Calu3 (cell line): ENCODE measurements at regions of chr4 and their contacts with region 1.

Region 1: DNA sequence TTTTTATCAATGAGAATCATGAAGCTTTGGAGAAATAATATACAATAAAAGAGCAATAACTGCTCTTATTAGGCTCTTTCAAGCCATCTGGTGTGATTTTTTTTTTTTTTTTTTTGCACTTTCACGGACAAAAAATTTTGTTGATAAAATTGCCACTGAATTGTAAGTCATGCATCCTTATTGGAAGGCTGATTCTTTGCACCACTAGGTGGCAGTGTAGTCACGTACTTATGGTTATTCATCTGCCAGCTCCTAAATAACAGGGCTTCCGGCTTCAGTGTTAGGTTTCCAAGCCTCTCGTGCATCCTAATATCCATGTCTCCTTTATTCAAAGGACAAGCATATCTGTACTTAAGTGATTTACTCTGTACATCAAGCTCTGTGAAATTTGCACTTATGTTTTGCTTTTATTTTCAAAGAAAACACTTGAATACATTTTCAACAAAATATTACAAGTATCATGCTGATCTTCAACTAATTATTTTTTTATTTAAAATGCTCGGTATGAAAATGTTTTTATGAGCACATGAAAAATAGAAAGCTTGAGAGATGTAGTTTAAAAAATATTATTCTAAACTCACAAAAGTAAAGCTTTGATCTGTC is 1578.3 kb upstream of the TENM3 start:
- DNase-seq: peak; percentile 72
- H3K4me3 Mint-ChIP-seq: no peak overlapping the region
- H3K27ac Mint-ChIP-seq: no peak overlapping the region
- H3K4me1 Mint-ChIP-seq: peaks cover 8% of the 10 kb centered on the region
- H3K27me3 Mint-ChIP-seq: no peaks in the 10 kb centered on the region
- CTCF ChIP-seq: peak; percentile 18

Region 2: DNA sequence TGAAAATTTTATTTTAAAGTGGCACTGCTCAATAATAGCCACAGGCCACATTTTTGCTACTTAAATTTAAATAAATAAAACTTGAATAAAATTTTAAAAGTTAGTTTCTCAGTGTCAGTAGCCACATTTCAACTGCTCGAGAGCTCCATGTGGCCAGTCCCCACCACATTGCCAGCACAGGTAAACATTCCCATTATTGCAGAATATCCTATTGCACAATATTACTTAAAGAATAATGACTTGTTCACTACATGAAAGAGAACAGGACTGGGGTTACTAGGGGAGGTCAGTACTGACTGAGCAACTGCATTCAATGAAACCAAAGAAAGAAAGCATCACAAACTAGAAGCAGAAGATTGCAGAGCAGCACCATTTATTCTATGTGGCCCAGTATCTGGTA is 623.3 kb before region 1 on chr4:
- CTCF ChIA-PET with region 1: no interaction called
- intact Hi-C with region 1: no loop called
- DNase-seq: no peak
- H3K4me3 Mint-ChIP-seq: no peak overlapping the region
- H3K27ac Mint-ChIP-seq: no peak overlapping the region
- H3K4me1 Mint-ChIP-seq: no peaks in the 10 kb centered on the region
- H3K27me3 Mint-ChIP-seq: no peaks in the 10 kb centered on the region
- CTCF ChIP-seq: no peak

Region 3: GRCh38 chr4:180060159-180060889 is 604.5 kb before region 1 on chr4:
- CTCF ChIA-PET with region 1: no interaction called
- intact Hi-C with region 1: loop called (anchors 10 kb)
- DNase-seq: no peak
- H3K4me3 Mint-ChIP-seq: no peak overlapping the region
- H3K27ac Mint-ChIP-seq: no peak overlapping the region
- H3K4me1 Mint-ChIP-seq: no peaks in the 10 kb centered on the region
- H3K27me3 Mint-ChIP-seq: no peaks in the 10 kb centered on the region
- CTCF ChIP-seq: no peak

Region 4: GRCh38 chr4:180350901-180351300 is 314.0 kb before region 1 on chr4:
- CTCF ChIA-PET with region 1: no interaction called
- intact Hi-C with region 1: no loop called
- DNase-seq: no peak
- H3K4me3 Mint-ChIP-seq: no peak overlapping the region
- H3K27ac Mint-ChIP-seq: no peak overlapping the region
- H3K4me1 Mint-ChIP-seq: peaks cover 8% of the 10 kb centered on the region
- H3K27me3 Mint-ChIP-seq: no peaks in the 10 kb centered on the region
- CTCF ChIP-seq: no peak

Region 5: GRCh38 chr4:180636696-180637404 is 28.0 kb before region 1 on chr4:
- CTCF ChIA-PET with region 1: no interaction called
- intact Hi-C with region 1: no loop called
- DNase-seq: no peak
- H3K4me3 Mint-ChIP-seq: no peak overlapping the region
- H3K27ac Mint-ChIP-seq: no peak overlapping the region
- H3K4me1 Mint-ChIP-seq: no peaks in the 10 kb centered on the region
- H3K27me3 Mint-ChIP-seq: no peaks in the 10 kb centered on the region
- CTCF ChIP-seq: no peak

Region 6: DNA sequence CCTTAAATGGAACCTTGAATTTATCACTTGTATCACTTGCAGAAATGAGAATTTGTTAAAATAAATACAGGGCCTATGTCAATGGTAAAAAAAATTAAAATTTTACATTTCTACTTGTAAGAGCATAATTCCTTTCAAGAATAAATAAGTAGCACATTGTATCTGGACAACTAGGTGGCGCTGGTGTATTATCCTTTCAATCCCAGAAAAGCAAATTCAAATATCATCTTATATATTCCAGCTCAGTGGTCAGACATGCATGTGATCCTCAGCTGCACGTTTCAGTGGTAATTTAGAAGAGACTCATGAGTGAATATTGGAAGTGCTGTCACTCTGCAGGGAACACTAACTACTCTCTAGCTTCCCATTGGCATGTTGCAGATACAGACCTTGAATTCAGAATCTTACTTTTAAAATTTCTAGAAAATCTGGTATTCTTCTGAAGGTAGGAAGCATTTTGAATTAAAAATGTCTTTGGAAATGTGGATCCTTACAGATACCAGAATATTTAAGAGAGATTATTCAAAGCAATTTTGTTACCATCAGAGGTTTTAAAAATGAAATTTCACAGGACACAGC is 163.7 kb after region 1 on chr4:
- CTCF ChIA-PET with region 1: no interaction called
- intact Hi-C with region 1: loop called (anchors 5 kb)
- DNase-seq: peak; percentile 21
- H3K4me3 Mint-ChIP-seq: no peak overlapping the region
- H3K27ac Mint-ChIP-seq: no peak overlapping the region
- H3K4me1 Mint-ChIP-seq: no peaks in the 10 kb centered on the region
- H3K27me3 Mint-ChIP-seq: no peaks in the 10 kb centered on the region
- CTCF ChIP-seq: peak; percentile 41

Region 7: GRCh38 chr4:181143250-181143854 is 478.5 kb after region 1 on chr4:
- CTCF ChIA-PET with region 1: no interaction called
- intact Hi-C with region 1: loop called (anchors 10 kb)
- DNase-seq: peak; percentile 68
- H3K4me3 Mint-ChIP-seq: no peak overlapping the region
- H3K27ac Mint-ChIP-seq: no peak overlapping the region
- H3K4me1 Mint-ChIP-seq: no peaks in the 10 kb centered on the region
- H3K27me3 Mint-ChIP-seq: no peaks in the 10 kb centered on the region
- CTCF ChIP-seq: peak; percentile 50